Left cardiac atrium (tissue), 4 donors: ENCODE measurements at regions of chr19 and their contacts with region 1.

Region 1: GRCh38 chr19:50357178-50358100 is 8.0 kb downstream of the NAPSA start:
- DNase-seq: peak; percentile 83
- ATAC-seq: peak; percentile 75 to 83

Region 2: GRCh38 chr19:50414864-50415660 is 57.6 kb after region 1 on chr19:
- intact Hi-C with region 1: loop called in 1 of 2 experiments (anchors 5 kb)
- DNase-seq: peak; percentile 82
- ATAC-seq: peak; percentile 80

Region 3: DNA sequence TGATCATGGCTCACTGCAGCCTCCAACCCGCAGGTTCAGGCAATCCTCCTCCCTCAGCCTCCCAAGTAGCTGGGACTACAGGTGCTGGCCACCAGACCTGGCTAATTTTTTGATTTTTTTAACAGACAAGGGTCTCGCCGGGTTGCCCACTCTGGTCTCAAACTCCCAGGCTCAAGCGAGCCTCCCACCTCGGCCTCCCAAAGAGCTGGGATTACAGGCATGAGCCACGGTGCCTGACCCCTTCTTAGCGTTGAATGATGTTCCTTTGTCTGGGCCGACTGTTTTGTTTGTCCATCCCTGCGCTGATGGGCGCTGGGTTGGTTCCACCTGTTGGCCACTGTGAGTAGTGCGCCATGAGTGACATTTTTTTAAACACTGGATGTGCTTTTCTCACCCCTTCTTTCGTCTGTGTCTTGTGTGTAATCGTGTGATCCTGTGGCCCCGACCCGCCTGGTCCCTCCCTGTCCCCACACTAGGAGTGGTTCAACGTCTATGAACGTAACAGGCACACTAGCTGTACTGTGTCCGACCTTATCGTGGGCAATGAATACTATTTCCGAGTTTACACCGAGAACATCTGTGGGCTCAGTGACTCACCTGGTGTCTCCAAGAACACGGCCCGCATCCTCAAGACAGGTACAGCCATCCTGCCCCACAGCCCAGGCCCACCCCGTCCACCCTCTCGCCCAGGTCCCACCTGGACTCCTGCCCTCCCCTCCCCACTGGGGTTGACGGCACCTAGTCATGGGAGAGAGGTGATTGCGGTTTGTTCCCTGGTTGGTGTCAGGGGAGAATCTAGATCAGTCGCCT is 103.8 kb after region 1 on chr19:
- intact Hi-C with region 1: loop called in 1 of 2 experiments (anchors 2 kb)
- DNase-seq: peak; percentile 57
- ATAC-seq: peak; percentile 78 to 79

Region 4: GRCh38 chr19:50777754-50778303 is 420.4 kb after region 1 on chr19:
- intact Hi-C with region 1: loop called in 1 of 2 experiments (anchors 10 kb)
- DNase-seq: no peak
- ATAC-seq: no peak